Activated B cell treated with CpG ODN at 0.5 μM for 24 hours (primary cell): ENCODE measurements at regions of chr5 and their contacts with region 1.

Region 1: DNA sequence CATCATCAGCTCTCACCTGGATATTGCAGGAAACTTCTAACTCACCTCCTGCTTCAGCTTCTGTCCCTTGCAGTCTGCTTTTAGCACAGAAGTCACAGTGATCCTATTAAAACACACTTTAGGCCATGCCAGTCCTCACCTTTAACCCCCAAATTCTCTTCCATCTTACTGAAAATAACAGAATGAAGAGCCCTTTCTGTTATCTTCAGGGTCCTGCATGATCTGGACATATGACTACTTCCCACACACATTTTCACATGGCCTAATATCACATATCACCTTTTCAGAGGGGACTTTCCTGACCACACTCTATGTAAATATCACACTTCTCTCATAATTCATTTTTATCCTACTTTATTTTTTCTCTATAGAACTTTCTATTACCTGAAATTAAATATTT is 550.6 kb upstream of the CLINT1 start:
- DNase-seq: no peak
- ATAC-seq: peak; percentile 38
- H3K4me3 Mint-ChIP-seq: no peak overlapping the region
- H3K27ac Mint-ChIP-seq: no peak overlapping the region
- H3K4me1 Mint-ChIP-seq: peaks cover 28% of the 10 kb centered on the region
- H3K27me3 Mint-ChIP-seq: no peaks in the 10 kb centered on the region
- CTCF ChIP-seq: no peak

Region 2: DNA sequence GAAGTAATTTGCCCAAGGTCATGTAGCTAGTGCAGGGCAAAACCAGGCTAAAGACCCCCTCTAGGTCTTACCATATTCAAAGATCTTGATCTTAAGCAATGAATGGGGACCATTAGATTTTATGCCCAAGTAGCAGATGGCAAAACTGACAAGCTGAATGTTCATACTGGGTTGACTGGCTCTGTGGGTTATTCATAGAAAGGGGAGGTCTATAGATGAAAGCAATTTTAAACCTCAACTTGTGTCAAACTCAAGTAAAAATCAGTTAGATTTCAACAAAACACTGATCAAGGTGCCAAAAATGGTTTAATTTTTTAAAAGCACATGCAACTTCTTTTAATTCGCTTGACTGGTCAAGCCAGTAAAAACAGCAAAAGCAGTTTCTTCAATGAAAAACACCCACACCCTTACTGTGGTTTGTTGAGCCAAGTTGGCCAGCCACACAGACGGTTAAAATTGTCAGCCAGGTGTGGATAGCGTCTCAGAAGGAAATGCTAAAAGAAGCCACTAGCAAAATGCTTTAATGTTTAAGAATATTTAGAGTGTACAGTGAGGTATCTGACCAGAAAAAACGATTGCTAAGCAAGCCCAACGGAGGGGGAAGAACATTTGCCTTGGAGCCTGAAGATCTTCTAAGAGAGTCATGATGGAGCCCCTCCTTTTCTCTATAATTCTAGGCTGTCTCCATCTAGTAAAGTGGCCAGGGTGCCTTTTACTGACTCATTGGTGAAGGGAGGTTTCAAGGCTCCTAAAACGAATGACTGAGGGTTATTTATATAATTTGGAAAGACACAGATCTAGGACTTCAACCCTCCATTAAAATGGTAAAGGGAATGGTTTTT is 10.9 kb before region 1 on chr5:
- CTCF ChIA-PET with region 1: no interaction called
- POLR2A ChIA-PET with region 1: no interaction called
- intact Hi-C with region 1: loop called (anchors 1 kb)
- DNase-seq: no peak
- ATAC-seq: peak; percentile 52
- H3K4me3 Mint-ChIP-seq: peak overlapping the region; percentile 37
- H3K27ac Mint-ChIP-seq: peak overlapping the region; percentile 38
- H3K4me1 Mint-ChIP-seq: peaks cover 59% of the 10 kb centered on the region
- H3K27me3 Mint-ChIP-seq: no peaks in the 10 kb centered on the region
- CTCF ChIP-seq: no peak

Region 3: GRCh38 chr5:158485604-158486081 is 76.1 kb after region 1 on chr5:
- CTCF ChIA-PET with region 1: no interaction called
- POLR2A ChIA-PET with region 1: no interaction called
- intact Hi-C with region 1: no loop called
- DNase-seq: no peak
- ATAC-seq: no peak
- H3K4me3 Mint-ChIP-seq: no peak overlapping the region
- H3K27ac Mint-ChIP-seq: no peak overlapping the region
- H3K4me1 Mint-ChIP-seq: no peaks in the 10 kb centered on the region
- H3K27me3 Mint-ChIP-seq: no peaks in the 10 kb centered on the region
- CTCF ChIP-seq: no peak

Region 4: DNA sequence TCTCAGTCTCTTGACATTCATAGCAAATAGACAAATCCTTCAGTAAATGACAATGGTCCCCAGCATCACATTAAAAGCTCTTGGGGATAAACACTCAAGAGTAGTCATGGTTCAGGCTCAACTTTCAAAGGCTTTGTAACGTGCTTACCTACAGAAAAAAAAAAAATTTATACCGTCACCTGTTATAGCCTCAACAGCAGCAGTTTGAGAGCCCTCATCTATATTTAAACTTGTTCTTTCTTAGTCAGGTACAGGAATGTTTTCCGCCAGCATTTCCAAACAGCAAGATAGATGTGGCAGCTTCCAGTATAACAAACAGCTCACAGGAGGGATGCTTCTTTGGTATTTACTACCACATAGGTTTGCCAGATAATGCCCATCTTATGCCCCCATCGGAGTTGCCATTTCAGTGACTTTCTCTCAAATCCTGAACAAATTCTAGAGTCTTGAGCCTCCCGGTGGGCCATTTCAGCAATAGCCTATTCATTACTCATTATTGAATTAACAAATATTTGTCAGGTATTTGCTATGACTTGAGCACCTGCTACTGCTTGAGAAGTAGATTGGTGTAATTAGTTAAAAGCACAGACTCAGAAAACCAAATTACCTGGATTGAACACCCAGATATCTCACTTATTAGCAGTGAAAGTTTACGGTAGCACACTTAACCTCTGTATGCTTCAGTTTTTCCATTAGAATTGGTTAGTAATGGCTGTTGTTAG is 220.2 kb after region 1 on chr5:
- CTCF ChIA-PET with region 1: no interaction called
- POLR2A ChIA-PET with region 1: no interaction called
- intact Hi-C with region 1: no loop called
- DNase-seq: no peak
- ATAC-seq: no peak
- H3K4me3 Mint-ChIP-seq: no peak overlapping the region
- H3K27ac Mint-ChIP-seq: no peak overlapping the region
- H3K4me1 Mint-ChIP-seq: no peaks in the 10 kb centered on the region
- H3K27me3 Mint-ChIP-seq: no peaks in the 10 kb centered on the region
- CTCF ChIP-seq: no peak